Activated naive CD4-positive, alpha-beta T cell treated with anti-CD3 and anti-CD28 coated beads for 36 hours (primary cell): ENCODE measurements at regions of chr6 and their contacts with region 1.

Region 1: DNA sequence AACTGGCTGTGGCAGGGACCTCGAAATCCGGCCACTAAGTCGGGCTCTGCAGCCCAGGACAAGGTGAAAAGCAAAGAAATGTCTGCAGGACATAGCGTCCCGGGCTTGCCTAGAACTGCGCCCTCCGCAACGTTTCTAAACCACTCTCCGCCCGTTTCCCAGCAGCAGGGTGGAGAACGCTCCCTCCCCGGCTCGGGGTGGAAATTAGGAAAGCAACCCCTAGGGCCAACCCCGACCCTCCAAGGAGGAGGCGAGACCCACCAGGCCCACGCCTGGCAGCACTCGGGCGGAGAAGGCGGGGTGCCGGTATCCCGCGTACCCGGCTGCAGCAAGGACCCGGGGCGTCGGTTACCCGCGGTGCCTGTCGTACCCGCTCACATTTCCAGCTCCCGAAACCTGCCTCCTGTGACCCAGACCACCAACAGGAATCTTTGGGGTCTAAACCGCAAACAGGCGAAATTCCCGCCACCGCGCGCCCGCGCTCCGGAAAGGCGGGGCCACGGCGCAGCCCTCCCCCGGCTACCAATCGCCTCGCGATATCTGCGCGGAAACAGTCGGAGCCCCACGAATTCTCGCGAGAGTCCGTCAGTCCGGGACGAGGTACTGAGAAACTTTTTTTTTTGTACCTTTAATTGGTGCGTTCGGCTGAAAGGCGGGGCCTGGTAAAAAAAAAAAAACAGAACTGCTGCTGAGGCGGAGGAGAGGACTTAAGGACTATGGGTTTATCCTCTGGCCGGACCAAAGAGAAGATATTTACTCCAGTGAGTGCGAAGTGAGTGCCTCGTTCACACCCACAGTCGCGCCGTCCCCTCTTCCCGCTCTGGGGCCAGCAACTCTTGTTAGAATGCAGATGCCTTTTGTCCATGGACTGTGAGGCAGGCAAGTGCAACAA is at the start of gene MMS22L:
- DNase-seq: peak; percentile 97
- H3K4me3 Mint-ChIP-seq: peak within 1 kb of the TSS; percentile 93
- H3K27ac Mint-ChIP-seq: peak within 1 kb of the TSS; percentile 81
- H3K4me1 Mint-ChIP-seq: peaks cover 21% of the 10 kb centered on the region
- H3K27me3 Mint-ChIP-seq: no peaks in the 10 kb centered on the region
- total RNA-seq, gene MMS22L: 34.1 to 37.4 TPM

Region 2: GRCh38 chr6:96521644-96522464 is 761.1 kb before region 1 on chr6 and contains the start of gene UFL1:
- CTCF ChIA-PET with region 1: no interaction called
- intact Hi-C with region 1: loop called (anchors 1 kb)
- DNase-seq: peak; percentile 92
- H3K4me3 Mint-ChIP-seq: peak within 1 kb of the TSS; percentile 98
- H3K27ac Mint-ChIP-seq: peak within 1 kb of the TSS; percentile 99
- H3K4me1 Mint-ChIP-seq: peaks cover 13% of the 10 kb centered on the region
- H3K27me3 Mint-ChIP-seq: no peaks in the 10 kb centered on the region
- total RNA-seq, gene UFL1: 28.3 to 28.7 TPM

Region 3: GRCh38 chr6:96923871-96924493 is 359.0 kb before region 1 on chr6:
- CTCF ChIA-PET with region 1: no interaction called
- intact Hi-C with region 1: loop called (anchors 2 kb)
- DNase-seq: no peak
- H3K4me3 Mint-ChIP-seq: peak overlapping the region; percentile 90
- H3K27ac Mint-ChIP-seq: peak overlapping the region; percentile 75
- H3K4me1 Mint-ChIP-seq: peaks cover 37% of the 10 kb centered on the region
- H3K27me3 Mint-ChIP-seq: no peaks in the 10 kb centered on the region

Region 4: GRCh38 chr6:97186416-97186999 is 96.5 kb before region 1 on chr6:
- CTCF ChIA-PET with region 1: interaction called, 4 read pairs
- intact Hi-C with region 1: loop called (anchors 1 kb)
- DNase-seq: peak; percentile 81
- H3K4me3 Mint-ChIP-seq: no peak overlapping the region
- H3K27ac Mint-ChIP-seq: no peak overlapping the region
- H3K4me1 Mint-ChIP-seq: no peaks in the 10 kb centered on the region
- H3K27me3 Mint-ChIP-seq: no peaks in the 10 kb centered on the region

Region 5: DNA sequence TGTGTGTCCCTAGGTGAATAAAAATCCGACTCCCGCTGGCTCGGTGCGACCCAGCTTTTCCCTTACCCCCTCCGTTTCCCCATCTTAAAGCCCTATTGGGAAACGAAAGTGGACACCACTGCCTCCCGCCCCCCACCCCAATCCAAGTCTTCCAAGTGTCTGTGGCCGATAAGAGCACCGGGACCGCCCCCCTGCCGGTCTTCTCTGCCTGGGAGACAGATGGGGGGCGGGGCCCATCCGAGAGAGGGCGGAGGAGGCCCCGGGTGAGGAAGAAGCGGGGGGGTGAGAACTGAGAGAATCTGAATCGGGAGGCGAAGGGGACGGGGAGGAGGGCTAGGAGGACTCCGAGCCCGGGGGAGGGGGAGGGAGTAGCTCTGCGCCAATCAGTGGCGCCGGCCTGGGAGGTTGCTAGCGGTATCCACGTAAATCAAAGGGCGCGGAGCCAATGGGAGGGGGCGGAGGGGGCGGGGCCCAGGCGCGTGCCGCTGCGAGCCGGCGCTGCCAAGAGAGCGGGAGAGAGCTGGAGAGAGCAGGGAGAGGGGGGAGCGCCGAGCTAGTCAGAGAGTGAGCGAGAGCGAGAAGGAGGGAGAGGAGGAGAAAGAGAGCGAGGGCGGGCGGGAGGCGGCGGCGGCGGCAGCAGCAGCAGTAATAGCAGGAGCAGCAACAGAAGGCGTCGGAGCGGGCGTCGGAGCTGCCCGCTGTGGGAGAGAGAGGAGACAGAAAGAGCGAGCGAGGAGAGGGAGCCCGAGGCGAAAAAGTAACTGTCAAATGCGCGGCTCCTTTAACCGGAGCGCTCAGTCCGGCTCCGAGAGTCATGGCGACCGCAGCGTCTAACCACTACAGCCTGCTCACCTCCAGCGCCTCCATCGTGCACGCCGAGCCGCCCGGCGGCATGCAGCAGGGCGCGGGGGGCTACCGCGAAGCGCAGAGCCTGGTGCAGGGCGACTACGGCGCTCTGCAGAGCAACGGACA is 1551.4 kb after region 1 on chr6 and contains the start of gene POU3F2:
- CTCF ChIA-PET with region 1: no interaction called
- intact Hi-C with region 1: loop called (anchors 5 kb)
- DNase-seq: peak; percentile 78
- H3K4me3 Mint-ChIP-seq: peak within 1 kb of the TSS; percentile 73
- H3K27ac Mint-ChIP-seq: no peak within 1 kb of the TSS
- H3K4me1 Mint-ChIP-seq: peaks cover 34% of the 10 kb centered on the region
- H3K27me3 Mint-ChIP-seq: peaks cover 72% of the 10 kb centered on the region
- total RNA-seq, gene POU3F2: not detected